Right ventricle myocardium inferior (tissue), 1 donor: ENCODE measurements at regions of chr11 and their contacts with region 1.

Region 1: DNA sequence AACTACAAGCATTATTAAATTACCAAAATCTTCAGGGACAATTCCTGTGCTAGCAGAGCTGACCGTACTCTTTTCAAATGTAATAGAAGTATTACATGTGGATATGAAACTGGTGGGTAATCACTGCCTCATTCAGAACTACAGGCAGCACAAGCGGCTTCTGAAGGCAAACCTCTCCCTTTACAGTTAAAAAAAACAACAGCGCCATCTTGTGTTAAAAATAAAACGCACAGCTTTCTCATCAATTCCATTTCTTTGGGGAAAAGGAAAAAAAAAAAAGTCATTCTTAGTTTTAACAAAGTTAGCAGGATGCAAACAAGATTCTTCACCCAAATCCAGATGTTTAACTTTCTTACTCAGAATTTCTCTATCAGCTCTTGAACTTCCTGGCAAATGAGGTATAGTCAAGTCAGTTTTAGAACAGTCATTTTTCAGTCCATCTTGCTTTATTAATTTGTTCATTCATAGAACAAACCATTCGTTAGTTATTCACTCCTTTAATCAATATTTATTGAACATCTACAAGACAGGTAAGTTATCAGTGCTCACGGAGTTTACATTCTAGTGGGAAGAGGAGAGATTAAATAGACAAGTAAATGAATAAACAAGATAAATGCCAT is 331.8 kb upstream of the MPPED2 start:
- DNase-seq: no peak
- ATAC-seq: no peak

Region 2: DNA sequence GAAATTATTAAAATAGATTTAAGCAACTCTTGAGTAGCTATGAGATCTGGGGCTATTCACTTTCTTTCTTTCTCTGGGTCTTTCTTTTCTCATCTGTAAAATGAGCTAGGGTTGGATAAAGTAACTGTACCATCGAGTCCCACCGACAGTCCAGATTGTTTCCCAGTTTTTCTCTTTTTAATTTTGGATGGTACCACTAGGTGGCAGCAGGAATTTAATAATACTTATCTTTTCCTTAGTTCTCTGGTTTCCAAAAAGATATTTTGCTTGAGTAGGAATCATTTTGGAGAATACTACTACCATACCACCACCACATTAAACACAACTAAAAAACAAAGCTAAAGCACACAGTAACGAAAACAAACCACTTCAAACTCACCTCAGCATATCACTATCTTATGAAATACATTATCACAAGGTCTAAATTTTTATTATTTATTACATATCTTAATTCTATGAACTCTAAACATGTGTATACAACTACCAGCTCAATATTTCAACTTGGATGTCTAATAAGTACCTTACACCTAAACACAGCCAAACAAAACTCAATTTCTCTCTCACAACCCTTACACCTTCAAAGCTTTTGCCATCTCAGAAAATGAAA is 1485.1 kb before region 1 on chr11:
- intact Hi-C with region 1: loop called (anchors 10 kb)
- DNase-seq: no peak
- ATAC-seq: no peak

Region 3: GRCh38 chr11:30131535-30131934 is 786.4 kb before region 1 on chr11:
- intact Hi-C with region 1: loop called (anchors 10 kb)
- DNase-seq: no peak
- ATAC-seq: peak; percentile 54

Region 4: DNA sequence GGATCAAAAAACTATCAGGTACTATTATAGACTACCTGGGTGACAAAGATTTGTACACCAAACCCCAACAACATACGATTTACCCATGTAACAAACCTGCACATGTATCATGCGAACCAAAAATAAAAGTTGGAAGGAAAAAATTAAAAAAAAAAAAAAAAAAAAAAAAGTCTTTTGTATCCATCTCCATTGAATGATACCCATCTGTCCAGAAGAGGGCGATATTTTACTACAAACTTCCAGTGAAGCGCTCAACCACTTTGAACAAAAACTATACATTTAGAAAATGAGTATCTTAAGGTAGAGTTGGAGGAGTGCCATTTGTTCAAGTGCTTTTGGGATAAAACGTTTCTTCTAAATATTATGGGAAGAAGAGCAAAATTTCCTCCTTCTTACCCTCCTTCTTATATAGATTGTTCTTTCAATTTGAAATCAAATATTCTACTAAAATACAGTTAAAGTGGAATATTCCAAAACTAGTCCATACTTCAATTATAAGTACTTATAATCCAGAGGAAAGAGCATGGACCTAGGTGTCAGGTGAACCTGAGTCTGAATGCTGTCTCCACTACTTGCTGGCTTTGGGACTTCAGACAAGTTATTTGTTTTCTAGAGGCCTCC is 571.8 kb before region 1 on chr11:
- intact Hi-C with region 1: loop called (anchors 2 kb)
- DNase-seq: no peak
- ATAC-seq: no peak

Region 5: GRCh38 chr11:30855383-30856006 is 62.5 kb before region 1 on chr11:
- intact Hi-C with region 1: loop called (anchors 10 kb)
- DNase-seq: no peak
- ATAC-seq: no peak